Activated T-helper 1 cell treated with anti-CD3 and anti-CD28 coated beads, Interleukin-12 subunit alpha, Interleukin-12 subunit beta, Interleukin-2, Interleukin-4 antibody, amounts not matched to agents 30 ng/mL and 10 ng/mL and 1 ng/mL, durations not matched to agents 14 hours and 24 hours and 36 hours (primary cell): ENCODE measurements at regions of chr4 and their contacts with region 1.

Region 1: GRCh38 chr4:68271851-68272756 is 26.6 kb upstream of the TMPRSS11B start:
- DNase-seq: no peak
- H3K4me3 Mint-ChIP-seq: no peak overlapping the region
- H3K27ac Mint-ChIP-seq: no peak overlapping the region
- H3K4me1 Mint-ChIP-seq: peaks cover 13% of the 10 kb centered on the region
- H3K27me3 Mint-ChIP-seq: peaks cover 12% of the 10 kb centered on the region

Region 2: GRCh38 chr4:68132342-68133330 is 139.5 kb before region 1 on chr4:
- intact Hi-C with region 1: no loop called
- DNase-seq: no peak
- H3K4me3 Mint-ChIP-seq: no peak overlapping the region
- H3K27ac Mint-ChIP-seq: no peak overlapping the region
- H3K4me1 Mint-ChIP-seq: no peaks in the 10 kb centered on the region
- H3K27me3 Mint-ChIP-seq: no peaks in the 10 kb centered on the region

Region 3: DNA sequence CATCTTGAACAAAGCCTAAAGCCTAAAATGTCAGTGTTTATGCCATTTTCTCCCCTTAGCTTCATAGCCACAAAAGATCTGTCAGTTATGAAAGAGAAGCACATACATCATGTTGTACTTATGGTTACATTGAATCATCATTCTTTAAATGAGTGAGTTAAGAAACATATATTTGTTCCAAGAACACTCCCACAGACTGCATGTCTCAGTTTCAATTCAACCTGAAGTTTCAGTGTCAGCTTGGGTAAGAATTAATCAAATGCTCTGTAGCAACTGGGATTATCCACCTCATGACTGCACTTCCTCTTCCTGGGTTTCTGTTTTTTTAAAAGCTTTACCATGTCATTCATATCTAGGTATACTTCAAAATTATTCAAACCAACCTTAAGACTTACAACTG is 22.7 kb before region 1 on chr4:
- intact Hi-C with region 1: loop called (anchors 1 kb)
- DNase-seq: no peak
- H3K4me3 Mint-ChIP-seq: peak overlapping the region; percentile 23
- H3K27ac Mint-ChIP-seq: peak overlapping the region; percentile 87
- H3K4me1 Mint-ChIP-seq: peaks cover 13% of the 10 kb centered on the region
- H3K27me3 Mint-ChIP-seq: no peaks in the 10 kb centered on the region

Region 4: DNA sequence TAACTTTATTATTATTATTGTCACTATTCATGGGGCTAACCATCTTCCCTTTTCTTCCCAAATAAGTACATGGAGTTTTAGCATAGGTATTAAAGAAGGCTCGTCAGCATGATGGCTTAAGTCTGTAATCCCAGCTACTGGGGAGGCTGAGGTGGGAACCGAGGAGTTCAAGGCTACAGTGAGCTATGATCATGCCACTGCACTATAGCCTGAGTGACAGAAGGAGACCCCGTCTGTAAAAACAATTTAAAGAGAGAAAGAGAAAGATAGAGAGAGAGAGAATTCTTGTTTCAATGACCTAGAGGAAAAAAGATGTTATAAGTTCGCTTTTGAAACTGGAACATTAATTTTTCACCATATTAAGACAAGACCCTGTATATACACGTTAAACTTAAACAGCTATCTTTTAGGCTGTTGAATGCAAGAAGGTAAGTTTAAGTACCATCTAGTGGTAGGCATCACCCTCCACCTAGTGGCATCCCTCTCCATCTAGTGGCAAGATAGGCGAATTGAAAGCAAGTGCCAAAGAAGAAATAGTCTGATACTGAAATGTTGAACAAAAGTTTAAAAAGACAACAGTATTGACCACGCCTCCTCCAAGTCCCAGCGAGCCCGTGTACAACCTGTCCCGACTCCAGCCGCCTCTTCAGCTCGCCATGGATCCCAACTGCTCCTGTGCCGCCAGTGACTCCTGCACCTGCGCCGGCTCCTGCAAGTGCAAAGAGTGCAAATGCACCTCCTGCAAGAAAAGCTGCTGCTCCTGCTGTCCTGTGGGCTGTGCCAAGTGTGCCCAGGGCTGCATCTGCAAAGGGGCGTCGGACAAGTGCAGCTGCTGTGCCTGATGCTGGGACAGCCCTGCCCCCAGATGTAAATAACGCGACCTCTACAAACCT is 103.8 kb after region 1 on chr4:
- intact Hi-C with region 1: loop called (anchors 1 kb)
- DNase-seq: peak; percentile 38
- H3K4me3 Mint-ChIP-seq: peak overlapping the region; percentile 65
- H3K27ac Mint-ChIP-seq: no peak overlapping the region
- H3K4me1 Mint-ChIP-seq: peaks cover 23% of the 10 kb centered on the region
- H3K27me3 Mint-ChIP-seq: peaks cover 30% of the 10 kb centered on the region

Region 5: DNA sequence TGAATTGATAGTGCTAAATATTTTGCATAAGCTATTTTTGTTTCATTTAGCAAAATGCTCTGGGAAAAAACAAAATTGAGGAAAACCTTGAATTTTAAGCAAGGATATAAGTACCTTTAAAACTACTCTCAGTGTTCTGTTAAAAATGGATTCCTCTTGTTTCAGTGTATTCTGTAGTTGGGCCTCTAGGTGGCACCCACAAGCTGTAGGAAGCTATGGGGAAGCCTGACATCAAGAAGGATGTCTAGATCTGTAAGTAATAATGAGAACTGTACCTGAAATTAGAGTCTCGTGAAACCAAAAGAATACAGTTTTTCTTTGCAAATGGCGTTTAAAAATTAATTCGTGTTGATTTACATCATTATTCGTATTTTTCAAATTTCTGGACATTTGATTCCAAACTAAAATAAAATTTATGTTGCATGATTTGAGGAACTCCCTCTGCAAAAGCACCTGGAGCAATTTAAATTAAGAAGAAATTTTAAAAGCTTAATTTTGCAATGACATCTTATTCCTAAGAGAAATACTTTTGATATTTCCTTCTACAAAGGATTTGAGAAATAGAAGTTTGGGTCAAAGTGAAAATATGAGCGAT is 226.4 kb after region 1 on chr4:
- intact Hi-C with region 1: loop called (anchors 1 kb)
- DNase-seq: peak; percentile 35
- H3K4me3 Mint-ChIP-seq: no peak overlapping the region
- H3K27ac Mint-ChIP-seq: no peak overlapping the region
- H3K4me1 Mint-ChIP-seq: no peaks in the 10 kb centered on the region
- H3K27me3 Mint-ChIP-seq: peaks cover 1% of the 10 kb centered on the region